ENCODE measurements at regions of chr12 and their contacts with region 1.

Region 1: GRCh38 chr12:93441617-93442410 is at the start of gene UBE2N:
- DNase-seq: peak; percentile 97
- H3K4me3 Mint-ChIP-seq: peak within 1 kb of the TSS; percentile 94
- H3K27ac Mint-ChIP-seq: peak within 1 kb of the TSS; percentile 95
- H3K4me1 Mint-ChIP-seq: peaks cover 46% of the 10 kb centered on the region
- H3K27me3 Mint-ChIP-seq: no peaks in the 10 kb centered on the region
- total RNA-seq, gene UBE2N: 177 TPM

Region 2: DNA sequence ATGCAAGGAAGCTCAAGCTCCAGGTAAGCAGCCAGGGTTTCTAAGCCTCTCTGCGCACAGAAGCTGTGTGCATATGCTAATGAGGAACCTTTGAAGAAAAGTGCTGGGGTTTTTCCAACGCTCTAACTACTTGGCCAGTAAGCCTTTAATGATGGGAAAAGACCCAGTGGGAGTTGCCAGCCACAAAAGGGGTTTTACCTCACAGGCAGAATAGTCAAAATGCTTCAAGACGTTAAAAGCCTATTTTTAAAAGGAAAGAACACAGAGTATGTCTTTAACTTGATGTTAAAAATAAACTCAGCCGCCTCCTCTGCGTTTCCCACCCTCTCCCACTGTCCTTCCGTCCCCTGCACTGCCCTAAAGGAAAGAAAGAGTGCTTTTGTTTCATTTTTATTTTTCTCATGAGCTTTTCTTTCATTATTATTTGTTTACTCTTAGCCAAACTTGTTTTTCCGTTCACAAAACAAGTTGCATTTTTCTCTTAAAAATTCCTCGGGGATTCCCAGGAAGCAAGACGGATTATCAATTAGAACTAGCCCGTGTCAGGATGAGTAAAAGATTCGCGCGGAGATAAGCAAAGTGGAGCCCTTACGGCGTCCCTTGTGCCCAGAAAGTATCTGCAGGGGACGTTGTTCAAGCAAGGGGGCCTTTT is 273.8 kb before region 1 on chr12:
- CTCF ChIA-PET with region 1: no interaction called
- POLR2A ChIA-PET with region 1: no interaction called
- intact Hi-C with region 1: loop called (anchors 5 kb)
- DNase-seq: peak; percentile 67
- H3K4me3 Mint-ChIP-seq: peak overlapping the region; percentile 61
- H3K27ac Mint-ChIP-seq: no peak overlapping the region
- H3K4me1 Mint-ChIP-seq: peaks cover 15% of the 10 kb centered on the region
- H3K27me3 Mint-ChIP-seq: peaks cover 10% of the 10 kb centered on the region

Region 3: DNA sequence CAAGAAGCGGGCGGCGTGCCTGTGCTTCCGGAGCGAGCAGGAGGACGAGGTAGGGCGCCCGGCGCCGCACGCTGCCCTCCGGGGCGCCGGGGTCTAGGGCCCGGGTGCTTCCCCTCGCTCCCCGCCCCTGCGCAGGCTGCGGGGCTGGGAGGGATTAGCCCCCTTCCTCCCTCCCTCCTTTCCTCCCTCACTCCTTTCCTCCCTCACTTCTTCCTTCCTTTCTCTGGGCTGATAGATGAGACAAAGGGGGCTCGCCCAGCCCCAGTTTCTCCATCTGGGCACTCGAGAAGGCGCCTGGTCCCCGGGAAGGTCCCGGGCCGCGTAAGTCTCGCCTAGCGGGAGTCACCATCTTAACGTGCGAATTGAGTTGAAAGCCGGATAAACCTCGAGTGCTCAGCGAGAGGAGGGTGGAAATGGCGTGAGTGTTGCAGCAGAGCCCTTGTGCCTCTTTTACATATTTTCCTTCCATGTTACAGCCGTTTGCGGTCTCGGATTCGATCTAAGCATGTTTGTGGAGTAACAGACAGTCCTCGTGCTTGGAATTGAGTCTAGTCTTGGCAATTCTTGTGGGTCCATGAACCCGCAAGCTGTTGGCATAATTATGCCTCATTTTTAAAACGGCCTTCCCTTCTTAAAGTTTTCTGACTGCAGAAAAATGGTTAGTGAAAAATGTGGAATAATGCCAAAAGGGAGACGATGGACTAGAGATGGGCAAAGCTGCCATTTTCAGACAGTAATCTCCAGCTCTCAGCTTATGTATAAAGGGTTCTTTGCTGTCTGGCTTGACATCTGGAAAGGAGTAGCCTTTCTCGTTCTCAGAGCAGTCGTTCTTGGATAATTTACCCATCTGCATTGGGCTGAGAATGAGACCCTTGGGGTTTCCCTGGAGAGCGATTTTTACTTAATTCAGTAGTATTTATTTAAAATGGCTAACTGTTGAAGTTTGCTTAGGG is 63.2 kb before region 1 on chr12:
- CTCF ChIA-PET with region 1: interaction called, 3 read pairs
- POLR2A ChIA-PET with region 1: interaction called, 5 read pairs
- intact Hi-C with region 1: loop called (anchors 1 kb)
- DNase-seq: peak; percentile 74
- H3K4me3 Mint-ChIP-seq: peak overlapping the region; percentile 99
- H3K27ac Mint-ChIP-seq: peak overlapping the region; percentile 99
- H3K4me1 Mint-ChIP-seq: peaks cover 40% of the 10 kb centered on the region
- H3K27me3 Mint-ChIP-seq: no peaks in the 10 kb centered on the region

Region 4: DNA sequence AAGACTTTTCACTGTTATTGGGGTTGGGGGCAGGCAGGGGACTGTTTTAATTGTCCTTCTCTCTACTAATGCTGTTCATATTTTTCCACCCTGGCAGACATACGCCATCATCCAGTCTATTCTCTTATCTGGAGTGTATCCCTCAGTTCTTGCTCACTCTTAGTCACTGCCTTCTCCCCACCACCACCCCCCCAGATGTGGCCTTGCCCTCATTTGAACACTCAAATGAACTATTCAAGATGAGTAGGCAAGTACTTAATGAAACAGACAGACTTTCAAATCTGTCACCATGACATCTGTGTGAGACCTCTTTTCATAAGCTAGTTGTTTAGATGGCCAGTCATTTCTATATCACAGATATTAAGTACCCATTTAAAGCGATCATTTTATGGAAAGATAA is 54.0 kb before region 1 on chr12:
- CTCF ChIA-PET with region 1: no interaction called
- POLR2A ChIA-PET with region 1: interaction called, 10 read pairs
- intact Hi-C with region 1: loop called (anchors 2 kb)
- DNase-seq: peak; percentile 83
- H3K4me3 Mint-ChIP-seq: no peak overlapping the region
- H3K27ac Mint-ChIP-seq: peak overlapping the region; percentile 67
- H3K4me1 Mint-ChIP-seq: peaks cover 62% of the 10 kb centered on the region
- H3K27me3 Mint-ChIP-seq: no peaks in the 10 kb centered on the region

Region 5: DNA sequence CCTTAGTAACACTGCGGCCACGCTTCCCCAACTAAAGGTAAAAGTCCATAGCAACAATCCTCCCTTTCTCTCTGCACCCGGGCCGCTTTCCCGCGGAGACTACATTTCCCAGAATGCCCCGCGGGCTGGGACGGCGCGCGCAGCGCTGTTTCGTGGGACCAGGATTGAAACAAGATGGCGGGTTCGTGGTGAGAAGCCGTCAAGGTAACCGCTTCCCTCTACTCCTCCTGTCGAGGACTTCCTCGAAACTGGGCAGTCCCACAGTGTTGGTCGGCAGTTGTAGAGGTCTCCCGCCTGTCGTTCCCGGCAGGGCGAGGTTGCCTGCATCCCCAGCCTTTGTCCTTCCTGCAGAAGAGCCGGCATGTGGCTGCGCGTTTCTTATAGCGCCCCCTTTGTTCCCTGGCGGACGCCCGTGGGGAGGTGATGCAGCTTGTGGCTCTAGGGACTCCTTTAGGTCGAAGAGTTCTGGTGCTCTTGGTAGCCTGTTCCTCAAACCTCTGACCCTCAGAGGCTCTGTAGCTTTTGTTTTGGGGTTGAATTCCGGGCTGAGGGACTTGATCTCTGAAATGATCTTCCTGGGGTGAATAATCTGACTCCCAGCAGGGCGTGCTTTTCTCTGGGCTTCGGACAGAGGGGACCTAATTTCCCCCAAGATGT is 25.7 kb after region 1 on chr12 and contains the start of gene MRPL42:
- CTCF ChIA-PET with region 1: interaction called, 5 read pairs
- POLR2A ChIA-PET with region 1: interaction called, 13 read pairs
- intact Hi-C with region 1: loop called (anchors 1 kb)
- DNase-seq: peak; percentile 95
- H3K4me3 Mint-ChIP-seq: peak within 1 kb of the TSS; percentile 93
- H3K27ac Mint-ChIP-seq: peak within 1 kb of the TSS; percentile 88
- H3K4me1 Mint-ChIP-seq: peaks cover 29% of the 10 kb centered on the region
- H3K27me3 Mint-ChIP-seq: no peaks in the 10 kb centered on the region
- total RNA-seq, gene MRPL42: 65.0 to 67.6 TPM

Region 6: GRCh38 chr12:93677195-93678064 is 235.6 kb after region 1 on chr12 and contains the start of gene CRADD:
- CTCF ChIA-PET with region 1: no interaction called
- POLR2A ChIA-PET with region 1: no interaction called
- intact Hi-C with region 1: loop called (anchors 1 kb)
- DNase-seq: peak; percentile 90
- H3K4me3 Mint-ChIP-seq: peak within 1 kb of the TSS; percentile 93
- H3K27ac Mint-ChIP-seq: peak within 1 kb of the TSS; percentile 100
- H3K4me1 Mint-ChIP-seq: peaks cover 41% of the 10 kb centered on the region
- H3K27me3 Mint-ChIP-seq: peaks cover 11% of the 10 kb centered on the region
- total RNA-seq, gene CRADD: 8.9 to 10.4 TPM

Region 7: GRCh38 chr12:94262228-94263010 is 820.6 kb after region 1 on chr12:
- CTCF ChIA-PET with region 1: no interaction called
- POLR2A ChIA-PET with region 1: no interaction called
- intact Hi-C with region 1: loop called (anchors 10 kb)
- DNase-seq: peak; percentile 85
- H3K4me3 Mint-ChIP-seq: peak overlapping the region; percentile 88
- H3K27ac Mint-ChIP-seq: peak overlapping the region; percentile 98
- H3K4me1 Mint-ChIP-seq: peaks cover 37% of the 10 kb centered on the region
- H3K27me3 Mint-ChIP-seq: no peaks in the 10 kb centered on the region

Measured in activated CD4-positive, alpha-beta memory T cell treated with anti-CD3 and anti-CD28 coated beads for 36 hours (primary cell).